Caco-2 (cell line): ENCODE measurements at regions of chr6 and their contacts with region 1.

Region 1: GRCh38 chr6:33711140-33712129 is at the start of gene UQCC2:
- DNase-seq: peak; percentile 95 to 96
- H3K4me3 ChIP-seq: peak within 1 kb of the TSS; percentile 68
- H3K4me3 Mint-ChIP-seq: peak within 1 kb of the TSS; percentile 93
- H3K27ac Mint-ChIP-seq: peak within 1 kb of the TSS; percentile 100
- H3K4me1 ChIP-seq: peaks cover 15% of the 10 kb centered on the region
- H3K4me1 Mint-ChIP-seq: peaks cover 14% of the 10 kb centered on the region
- H3K27me3 ChIP-seq: no peaks in the 10 kb centered on the region
- H3K27me3 Mint-ChIP-seq: no peaks in the 10 kb centered on the region
- CTCF ChIP-seq: peak; percentile 41 to 83
- total RNA-seq, gene UQCC2: 115 and 122 TPM in 2 replicates

Region 2: DNA sequence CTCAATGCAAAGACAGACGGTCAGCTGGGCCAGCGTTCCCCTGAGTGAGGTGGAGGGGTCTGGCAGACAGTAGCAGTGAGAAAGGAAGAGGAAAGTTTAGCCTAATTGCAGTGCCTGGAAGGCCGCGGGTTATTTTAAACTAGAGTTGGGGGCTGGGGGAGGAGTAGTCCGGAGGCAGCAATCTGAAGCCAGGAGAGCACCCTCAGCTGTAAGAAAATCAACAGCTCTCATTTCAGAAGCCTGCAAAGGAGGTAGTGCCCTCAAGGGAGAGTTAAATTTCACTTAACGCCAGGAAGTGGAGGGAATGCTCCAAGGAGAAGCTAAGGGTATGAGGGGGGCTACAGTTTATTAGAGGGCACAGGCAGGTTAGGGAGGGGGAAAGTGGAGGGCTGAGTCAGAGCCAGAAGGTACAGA is 476.2 kb before region 1 on chr6:
- CTCF ChIA-PET with region 1: no interaction called
- POLR2A ChIA-PET with region 1: no interaction called
- intact Hi-C with region 1: no loop called
- DNase-seq: no peak
- H3K4me3 ChIP-seq: no peak overlapping the region
- H3K4me3 Mint-ChIP-seq: no peak overlapping the region
- H3K27ac Mint-ChIP-seq: no peak overlapping the region
- H3K4me1 ChIP-seq: no peaks in the 10 kb centered on the region
- H3K4me1 Mint-ChIP-seq: no peaks in the 10 kb centered on the region
- H3K27me3 ChIP-seq: no peaks in the 10 kb centered on the region
- H3K27me3 Mint-ChIP-seq: peaks cover 20% of the 10 kb centered on the region
- CTCF ChIP-seq: no peak

Region 3: GRCh38 chr6:33585403-33586107 is 125.9 kb before region 1 on chr6:
- CTCF ChIA-PET with region 1: interaction called, 20 read pairs
- POLR2A ChIA-PET with region 1: interaction called, 6 read pairs
- intact Hi-C with region 1: no loop called
- DNase-seq: peak; percentile 80 to 89
- H3K4me3 ChIP-seq: no peak overlapping the region
- H3K4me3 Mint-ChIP-seq: peak overlapping the region; percentile 42
- H3K27ac Mint-ChIP-seq: no peak overlapping the region
- H3K4me1 ChIP-seq: peaks cover 17% of the 10 kb centered on the region
- H3K4me1 Mint-ChIP-seq: peaks cover 3% of the 10 kb centered on the region
- H3K27me3 ChIP-seq: no peaks in the 10 kb centered on the region
- H3K27me3 Mint-ChIP-seq: no peaks in the 10 kb centered on the region
- CTCF ChIP-seq: peak; percentile 96 to 98

Region 4: GRCh38 chr6:33744001-33744848 is 32.8 kb after region 1 on chr6:
- CTCF ChIA-PET with region 1: interaction called, 23 read pairs
- POLR2A ChIA-PET with region 1: interaction called, 8 read pairs
- intact Hi-C with region 1: loop called (anchors 1 kb)
- DNase-seq: peak; percentile 76 to 80
- H3K4me3 ChIP-seq: no peak overlapping the region
- H3K4me3 Mint-ChIP-seq: peak overlapping the region; percentile 39
- H3K27ac Mint-ChIP-seq: no peak overlapping the region
- H3K4me1 ChIP-seq: peaks cover 12% of the 10 kb centered on the region
- H3K4me1 Mint-ChIP-seq: peaks cover 10% of the 10 kb centered on the region
- H3K27me3 ChIP-seq: no peaks in the 10 kb centered on the region
- H3K27me3 Mint-ChIP-seq: peaks cover 3% of the 10 kb centered on the region
- CTCF ChIP-seq: peak; percentile 86 to 89

Region 5: GRCh38 chr6:33761922-33762629 is 50.6 kb after region 1 on chr6:
- CTCF ChIA-PET with region 1: interaction called, 40 read pairs
- POLR2A ChIA-PET with region 1: interaction called, 15 read pairs
- intact Hi-C with region 1: loop called (anchors 1 kb)
- DNase-seq: peak; percentile 90 to 92
- H3K4me3 ChIP-seq: no peak overlapping the region
- H3K4me3 Mint-ChIP-seq: no peak overlapping the region
- H3K27ac Mint-ChIP-seq: no peak overlapping the region
- H3K4me1 ChIP-seq: peaks cover 7% of the 10 kb centered on the region; the same call in 1 of the 2 replicates
- H3K4me1 Mint-ChIP-seq: peaks cover 10% of the 10 kb centered on the region
- H3K27me3 ChIP-seq: no peaks in the 10 kb centered on the region
- H3K27me3 Mint-ChIP-seq: no peaks in the 10 kb centered on the region
- CTCF ChIP-seq: peak; percentile 80 to 92